ENCODE measurements at regions of chr17 and their contacts with region 1.

Region 1: GRCh38 chr17:12107905-12108304 is 87.2 kb downstream of the MAP2K4 start:
- DNase-seq: no peak
- H3K4me3 ChIP-seq: no peak overlapping the region
- H3K27ac ChIP-seq: no peak overlapping the region
- H3K4me1 ChIP-seq: peaks cover 10 to 36% of the 10 kb centered on the region in 2 donors
- H3K27me3 ChIP-seq: no peaks in the 10 kb centered on the region
- CTCF ChIP-seq: no peak
- POLR2A ChIP-seq: no peak

Region 2: GRCh38 chr17:12041316-12041715 is 66.6 kb before region 1 on chr17:
- intact Hi-C with region 1: loop called in 1 of 2 experiments (anchors 10 kb)
- DNase-seq: peak in 2 of 7 donors; percentile 12 to 16
- H3K4me3 ChIP-seq: peak overlapping the region in 1 of 4 donors; percentile 20
- H3K27ac ChIP-seq: peak overlapping the region in 4 of 5 donors; percentile 8 to 37 (median 24)
- H3K4me1 ChIP-seq: peaks cover 9 to 56% of the 10 kb centered on the region in 2 donors
- H3K27me3 ChIP-seq: no peaks in the 10 kb centered on the region
- CTCF ChIP-seq: no peak
- POLR2A ChIP-seq: no peak